Activated T-helper 1 cell treated with anti-CD3 and anti-CD28 coated beads, Interleukin-12 subunit alpha, Interleukin-12 subunit beta, Interleukin-2, Interleukin-4 antibody, amounts not matched to agents 30 ng/mL and 10 ng/mL and 1 ng/mL, durations not matched to agents 14 hours and 24 hours and 36 hours (primary cell): ENCODE measurements at regions of chr16 and their contacts with region 1.

Region 1: DNA sequence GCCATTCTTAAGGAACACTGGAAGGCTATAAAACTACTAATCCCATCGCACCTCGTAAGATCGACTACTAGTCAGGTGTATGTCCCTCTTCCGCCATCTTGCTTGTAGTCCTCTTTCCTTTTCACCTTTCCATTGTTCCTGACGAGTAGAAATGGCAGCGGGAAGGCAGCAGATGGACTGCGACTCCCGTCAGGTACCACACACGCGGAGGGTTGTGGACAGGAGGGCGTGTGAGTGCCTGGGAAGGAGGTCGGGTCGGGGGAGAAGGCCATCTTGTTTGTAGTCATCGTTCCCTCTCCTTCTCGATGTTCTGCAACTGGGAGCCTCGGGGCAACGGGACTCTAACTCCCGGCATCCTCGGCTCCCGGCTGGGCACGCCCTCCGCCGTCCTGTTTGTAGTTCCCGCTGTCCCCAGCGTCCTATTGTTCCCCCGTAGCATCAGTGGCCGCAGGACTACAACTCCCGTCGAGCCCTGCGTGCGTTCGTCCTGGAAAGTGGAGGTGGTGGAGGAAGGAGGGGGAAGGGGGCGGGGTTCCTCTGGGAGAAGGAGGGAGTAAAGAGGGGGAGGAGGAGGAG is 324 bp upstream of the FBXL19 start:
- DNase-seq: peak; percentile 95
- H3K4me3 Mint-ChIP-seq: peak overlapping the region; percentile 95
- H3K27ac Mint-ChIP-seq: peak overlapping the region; percentile 100
- H3K4me1 Mint-ChIP-seq: peaks cover 18% of the 10 kb centered on the region
- H3K27me3 Mint-ChIP-seq: no peaks in the 10 kb centered on the region

Region 2: GRCh38 chr16:30429678-30430427 is 493.2 kb before region 1 on chr16 and contains the start of gene DCTPP1:
- intact Hi-C with region 1: loop called (anchors 1 kb)
- DNase-seq: peak; percentile 96
- H3K4me3 Mint-ChIP-seq: no peak within 1 kb of the TSS
- H3K27ac Mint-ChIP-seq: no peak within 1 kb of the TSS
- H3K4me1 Mint-ChIP-seq: peaks cover 31% of the 10 kb centered on the region
- H3K27me3 Mint-ChIP-seq: no peaks in the 10 kb centered on the region
- total RNA-seq, gene DCTPP1: 173 and 178 TPM in 2 replicates

Region 3: GRCh38 chr16:30698139-30698815 is 224.8 kb before region 1 on chr16:
- intact Hi-C with region 1: loop called (anchors 1 kb)
- DNase-seq: peak; percentile 99
- H3K4me3 Mint-ChIP-seq: peak overlapping the region; percentile 99
- H3K27ac Mint-ChIP-seq: peak overlapping the region; percentile 99
- H3K4me1 Mint-ChIP-seq: peaks cover 42% of the 10 kb centered on the region
- H3K27me3 Mint-ChIP-seq: peaks cover 2% of the 10 kb centered on the region

Region 4: GRCh38 chr16:30775392-30776188 is 147.5 kb before region 1 on chr16:
- intact Hi-C with region 1: no loop called
- DNase-seq: peak; percentile 56
- H3K4me3 Mint-ChIP-seq: peak overlapping the region; percentile 94
- H3K27ac Mint-ChIP-seq: peak overlapping the region; percentile 96
- H3K4me1 Mint-ChIP-seq: peaks cover 20% of the 10 kb centered on the region
- H3K27me3 Mint-ChIP-seq: no peaks in the 10 kb centered on the region

Region 5: GRCh38 chr16:30844671-30845449 is 78.2 kb before region 1 on chr16:
- intact Hi-C with region 1: loop called (anchors 1 kb)
- DNase-seq: peak; percentile 77
- H3K4me3 Mint-ChIP-seq: no peak overlapping the region
- H3K27ac Mint-ChIP-seq: peak overlapping the region; percentile 13
- H3K4me1 Mint-ChIP-seq: peaks cover 12% of the 10 kb centered on the region
- H3K27me3 Mint-ChIP-seq: peaks cover 1% of the 10 kb centered on the region

Region 6: DNA sequence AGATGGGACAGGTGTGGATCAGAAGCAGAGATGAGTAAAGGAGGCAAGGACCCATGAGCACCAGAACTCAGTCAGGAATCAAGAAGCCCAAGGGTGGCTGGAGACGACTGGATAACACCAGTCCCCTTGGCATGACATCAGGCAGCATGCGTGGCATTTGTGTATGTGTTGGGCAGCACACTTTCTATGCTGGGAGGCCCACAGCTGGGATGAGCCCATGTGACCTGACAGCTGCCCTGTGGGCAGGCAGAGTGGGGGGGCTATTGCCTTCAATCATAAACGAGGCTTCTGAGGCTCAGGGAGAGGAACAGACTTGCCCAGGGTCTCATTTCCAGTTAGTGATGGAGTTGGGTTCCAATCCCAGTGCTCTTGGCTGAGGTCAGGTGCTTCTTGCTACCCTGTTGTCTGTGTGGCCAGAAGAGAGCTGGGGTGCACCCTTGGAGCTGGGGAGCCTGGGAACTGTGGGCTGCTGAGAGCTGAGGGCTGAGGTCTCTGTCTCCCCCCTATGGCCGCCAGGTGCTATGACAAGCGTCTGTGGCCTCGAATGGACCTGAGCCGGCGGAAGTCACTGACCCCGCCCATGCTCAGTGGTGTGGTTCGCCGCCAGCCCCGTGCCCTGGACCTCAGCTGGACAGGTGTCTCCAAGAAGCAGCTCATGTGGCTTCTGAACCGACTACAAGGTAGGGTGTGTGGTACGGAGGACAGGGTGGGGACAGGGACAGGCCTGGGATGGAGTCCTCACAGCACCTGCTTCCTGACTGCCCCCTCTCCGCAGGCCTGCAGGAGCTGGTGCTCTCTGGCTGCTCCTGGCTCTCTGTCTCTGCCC is 18.8 kb after region 1 on chr16:
- intact Hi-C with region 1: loop called (anchors 1 kb)
- DNase-seq: peak; percentile 64
- H3K4me3 Mint-ChIP-seq: peak overlapping the region; percentile 56
- H3K27ac Mint-ChIP-seq: no peak overlapping the region
- H3K4me1 Mint-ChIP-seq: peaks cover 28% of the 10 kb centered on the region
- H3K27me3 Mint-ChIP-seq: no peaks in the 10 kb centered on the region

Region 7: DNA sequence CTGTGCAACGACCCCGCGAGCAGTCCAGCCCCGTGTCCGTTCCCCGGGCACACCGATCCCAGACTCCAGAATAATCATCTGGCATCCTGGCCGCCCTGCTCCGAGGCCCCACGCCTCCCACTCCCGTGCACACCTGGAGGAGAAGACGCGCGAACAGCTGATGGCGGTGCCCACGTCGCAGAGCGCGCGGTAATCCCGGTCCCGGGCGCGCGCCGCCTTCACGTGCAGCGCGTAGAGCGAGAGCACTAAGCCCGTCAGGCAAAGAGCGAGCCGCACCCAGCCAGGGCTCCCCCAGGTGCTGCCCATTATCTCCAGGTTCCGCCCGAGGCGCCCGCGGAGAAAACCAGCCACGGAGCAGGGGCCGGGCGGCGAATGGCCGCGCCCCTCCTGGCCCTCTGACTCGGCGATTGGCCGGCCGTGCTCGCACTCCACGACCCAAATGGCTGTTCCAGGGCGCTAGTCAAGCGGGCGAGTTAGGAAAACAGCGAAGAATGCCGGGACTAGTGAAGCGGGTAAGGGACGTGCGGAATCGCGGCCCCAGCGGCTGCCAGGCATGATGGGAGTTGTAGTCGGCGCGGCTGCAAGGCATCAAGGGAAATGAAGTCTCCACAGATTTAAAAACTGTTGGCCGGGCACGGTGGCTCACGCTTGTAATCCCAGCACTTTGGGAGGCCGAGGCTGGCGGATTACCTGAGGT is 171.5 kb after region 1 on chr16 and contains the start of gene VKORC1:
- intact Hi-C with region 1: loop called (anchors 1 kb)
- DNase-seq: peak; percentile 84
- H3K4me3 Mint-ChIP-seq: peak within 1 kb of the TSS; percentile 95
- H3K27ac Mint-ChIP-seq: peak within 1 kb of the TSS; percentile 82
- H3K4me1 Mint-ChIP-seq: peaks cover 27% of the 10 kb centered on the region
- H3K27me3 Mint-ChIP-seq: no peaks in the 10 kb centered on the region
- total RNA-seq, gene VKORC1: 47.3 and 53.0 TPM in 2 replicates

Region 8: GRCh38 chr16:31458844-31459721 is 536.0 kb after region 1 on chr16 and contains the start of gene ARMC5:
- intact Hi-C with region 1: loop called (anchors 1 kb)
- DNase-seq: peak; percentile 95
- H3K4me3 Mint-ChIP-seq: peak within 1 kb of the TSS; percentile 93
- H3K27ac Mint-ChIP-seq: peak within 1 kb of the TSS; percentile 95
- H3K4me1 Mint-ChIP-seq: peaks cover 41% of the 10 kb centered on the region
- H3K27me3 Mint-ChIP-seq: no peaks in the 10 kb centered on the region
- total RNA-seq, gene ARMC5: 11.2 and 12.7 TPM in 2 replicates